K562 (cell line): ENCODE measurements at regions of chr1 and their contacts with region 1.

Region 1: GRCh38 chr1:167715157-167715999 is 6.4 kb upstream of the MPZL1 start:
- DNase-seq: peak; percentile 75 to 94 (median 78)
- ATAC-seq: peak; percentile 65
- H3K4me3 ChIP-seq: peak overlapping the region; percentile 66
- H3K27ac ChIP-seq: peak overlapping the region; percentile 99
- H3K4me1 ChIP-seq: peaks cover 21 to 22% of the 10 kb centered on the region in 2 experiments
- H3K27me3 ChIP-seq: no peaks in the 10 kb centered on the region
- CTCF ChIP-seq: peak; percentile 87 to 98 (median 97)
- EP300 ChIP-seq: peak; percentile 86
- POLR2A ChIP-seq: no peak
- RAD21 ChIP-seq: peak; percentile 48 to 60

Region 2: GRCh38 chr1:167705250-167705649 is 10.1 kb before region 1 on chr1:
- CTCF ChIA-PET with region 1: no interaction called
- POLR2A ChIA-PET with region 1: interaction called, 25 read pairs
- in situ Hi-C with region 1: no loop called
- intact Hi-C with region 1: no loop called
- DNase-seq: no peak
- ATAC-seq: no peak
- H3K4me3 ChIP-seq: no peak overlapping the region
- H3K27ac ChIP-seq: no peak overlapping the region
- H3K4me1 ChIP-seq: no peaks in the 10 kb centered on the region
- H3K27me3 ChIP-seq: no peaks in the 10 kb centered on the region
- CTCF ChIP-seq: no peak
- EP300 ChIP-seq: no peak
- POLR2A ChIP-seq: no peak
- RAD21 ChIP-seq: no peak

Region 3: GRCh38 chr1:167797015-167797414 is 81.6 kb after region 1 on chr1:
- CTCF ChIA-PET with region 1: no interaction called
- POLR2A ChIA-PET with region 1: interaction called, 4 read pairs
- in situ Hi-C with region 1: loop called (anchors 5 kb)
- intact Hi-C with region 1: no loop called
- DNase-seq: peak in 2 of 4 experiments; percentile 49 to 56
- ATAC-seq: peak; percentile 91
- H3K4me3 ChIP-seq: no peak overlapping the region
- H3K27ac ChIP-seq: no peak overlapping the region
- H3K4me1 ChIP-seq: peaks cover 0 to 3% of the 10 kb centered on the region in 2 experiments; a peak in 2 of 5 replicates
- H3K27me3 ChIP-seq: no peaks in the 10 kb centered on the region
- CTCF ChIP-seq: peak in 2 of 3 experiments; percentile 17 to 30; a peak in 2 of 6 replicates
- EP300 ChIP-seq: no peak
- POLR2A ChIP-seq: no peak
- RAD21 ChIP-seq: 0 out of 4 replicates have a peak, but pooled peaks have one; percentile 6 to 31

Region 4: GRCh38 chr1:167819849-167820683 is 104.7 kb after region 1 on chr1:
- CTCF ChIA-PET with region 1: interaction called, 3 read pairs
- POLR2A ChIA-PET with region 1: interaction called, 3 read pairs
- in situ Hi-C with region 1: no loop called
- intact Hi-C with region 1: loop called (anchors 5 kb)
- DNase-seq: peak; percentile 90 to 94 (median 92)
- ATAC-seq: peak; percentile 94
- H3K4me3 ChIP-seq: peak overlapping the region; percentile 38
- H3K27ac ChIP-seq: peak overlapping the region; percentile 71
- H3K4me1 ChIP-seq: peaks cover 22 to 41% of the 10 kb centered on the region in 2 experiments
- H3K27me3 ChIP-seq: no peaks in the 10 kb centered on the region
- CTCF ChIP-seq: no peak
- EP300 ChIP-seq: peak; percentile 42; the same call in 1 of the 2 replicates
- POLR2A ChIP-seq: peak; percentile 74
- RAD21 ChIP-seq: peak; percentile 25 to 36; a peak in 3 of 4 replicates

Region 5: DNA sequence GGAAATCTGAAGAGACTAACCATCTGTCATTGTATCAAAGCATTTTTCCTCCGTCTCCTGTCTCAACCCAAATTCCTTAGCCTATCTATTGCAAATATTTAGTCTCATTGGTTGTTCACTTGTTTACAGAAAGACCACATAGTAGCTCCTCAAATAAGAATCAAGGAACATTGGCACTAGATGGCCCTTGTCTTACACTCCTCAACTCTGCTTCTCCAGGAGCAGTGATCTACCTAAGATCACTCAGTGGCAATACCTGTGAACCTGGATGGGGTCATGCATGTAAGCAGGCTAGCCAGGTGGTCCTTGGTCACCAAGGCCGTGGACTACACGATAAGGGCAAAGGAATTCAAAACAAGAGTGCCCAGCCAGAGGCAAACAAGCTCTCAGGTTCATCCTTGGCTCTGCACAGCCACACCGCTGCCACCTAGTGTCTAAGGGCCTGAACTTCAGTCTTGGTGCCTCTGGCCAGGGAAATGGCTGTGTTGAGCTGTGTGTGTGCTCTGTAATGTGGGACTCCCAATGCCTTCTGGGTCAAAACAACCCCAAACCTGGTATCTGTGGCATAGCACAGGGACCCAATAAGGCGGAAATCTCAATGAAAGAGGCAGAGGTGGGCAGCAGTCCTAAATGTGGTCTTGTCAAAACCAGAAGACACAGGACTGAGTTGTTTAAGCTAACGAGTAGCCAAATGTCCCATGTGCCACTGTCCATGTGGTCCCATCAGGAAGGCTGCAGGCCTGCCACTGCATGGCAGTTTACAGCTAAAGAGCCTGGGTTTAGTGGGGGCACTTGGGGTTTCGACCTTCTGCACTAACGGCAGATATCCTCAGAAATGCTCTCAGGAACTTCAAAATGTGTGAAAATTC is 366.9 kb after region 1 on chr1:
- CTCF ChIA-PET with region 1: no interaction called
- POLR2A ChIA-PET with region 1: interaction called, 6 read pairs
- in situ Hi-C with region 1: loop called (anchors 5 kb)
- intact Hi-C with region 1: loop called (anchors 2 kb)
- DNase-seq: peak; percentile 78 to 87 (median 81)
- ATAC-seq: peak; percentile 92
- H3K4me3 ChIP-seq: no peak overlapping the region
- H3K27ac ChIP-seq: no peak overlapping the region; the same call in 2 of the 3 replicates
- H3K4me1 ChIP-seq: peaks cover 8 to 9% of the 10 kb centered on the region in 2 experiments; a peak in 4 of 5 replicates
- H3K27me3 ChIP-seq: no peaks in the 10 kb centered on the region
- CTCF ChIP-seq: peak; percentile 90 to 98 (median 96)
- EP300 ChIP-seq: no peak
- POLR2A ChIP-seq: no peak
- RAD21 ChIP-seq: peak; percentile 62 to 89